ENCODE measurements at regions of chr14 and their contacts with region 1.

Region 1: GRCh38 chr14:69766984-69767368 is at the start of gene SRSF5:
- DNase-seq: peak; percentile 94
- H3K4me3 ChIP-seq: peak within 1 kb of the TSS; percentile 87 to 96 (median 90)
- H3K27ac ChIP-seq: peak within 1 kb of the TSS; percentile 98
- H3K4me1 ChIP-seq: peaks cover 17% of the 10 kb centered on the region
- H3K27me3 ChIP-seq: no peaks in the 10 kb centered on the region
- CTCF ChIP-seq: no peak
- total RNA-seq, gene SRSF5: 125 to 257 TPM

Region 2: DNA sequence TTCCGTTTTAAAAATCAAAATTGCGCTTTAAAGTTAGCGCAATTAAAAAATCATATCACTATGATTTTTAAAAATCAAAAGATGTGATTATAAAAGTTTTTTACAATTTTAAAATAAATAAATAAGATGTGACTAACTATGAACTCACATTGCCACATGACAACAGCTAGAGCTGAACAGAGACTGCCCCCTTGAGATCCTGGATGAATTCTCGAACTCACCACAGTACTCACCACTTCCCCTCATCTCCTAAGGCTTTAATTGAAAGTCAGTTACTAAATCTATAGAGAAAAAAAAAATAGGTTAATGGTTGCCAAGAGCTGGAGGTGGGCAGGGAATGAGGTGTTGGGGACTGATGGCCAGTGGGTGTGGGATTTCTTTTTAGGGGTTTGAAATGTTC is 1358.3 kb before region 1 on chr14:
- CTCF ChIA-PET with region 1: no interaction called
- dilution Hi-C with region 1: no loop called
- in situ Hi-C with region 1: no loop called
- intact Hi-C with region 1: no loop called
- DNase-seq: no peak
- H3K4me3 ChIP-seq: no peak overlapping the region
- H3K27ac ChIP-seq: no peak overlapping the region
- H3K4me1 ChIP-seq: peaks cover 44% of the 10 kb centered on the region
- H3K27me3 ChIP-seq: no peaks in the 10 kb centered on the region
- CTCF ChIP-seq: no peak

Region 3: GRCh38 chr14:69741055-69741454 is 25.9 kb before region 1 on chr14:
- CTCF ChIA-PET with region 1: no interaction called
- dilution Hi-C with region 1: no loop called
- in situ Hi-C with region 1: no loop called
- intact Hi-C with region 1: loop called (anchors 2 kb)
- DNase-seq: peak; percentile 53
- H3K4me3 ChIP-seq: no peak overlapping the region
- H3K27ac ChIP-seq: no peak overlapping the region
- H3K4me1 ChIP-seq: peaks cover 13% of the 10 kb centered on the region
- H3K27me3 ChIP-seq: no peaks in the 10 kb centered on the region
- CTCF ChIP-seq: no peak

Region 4: DNA sequence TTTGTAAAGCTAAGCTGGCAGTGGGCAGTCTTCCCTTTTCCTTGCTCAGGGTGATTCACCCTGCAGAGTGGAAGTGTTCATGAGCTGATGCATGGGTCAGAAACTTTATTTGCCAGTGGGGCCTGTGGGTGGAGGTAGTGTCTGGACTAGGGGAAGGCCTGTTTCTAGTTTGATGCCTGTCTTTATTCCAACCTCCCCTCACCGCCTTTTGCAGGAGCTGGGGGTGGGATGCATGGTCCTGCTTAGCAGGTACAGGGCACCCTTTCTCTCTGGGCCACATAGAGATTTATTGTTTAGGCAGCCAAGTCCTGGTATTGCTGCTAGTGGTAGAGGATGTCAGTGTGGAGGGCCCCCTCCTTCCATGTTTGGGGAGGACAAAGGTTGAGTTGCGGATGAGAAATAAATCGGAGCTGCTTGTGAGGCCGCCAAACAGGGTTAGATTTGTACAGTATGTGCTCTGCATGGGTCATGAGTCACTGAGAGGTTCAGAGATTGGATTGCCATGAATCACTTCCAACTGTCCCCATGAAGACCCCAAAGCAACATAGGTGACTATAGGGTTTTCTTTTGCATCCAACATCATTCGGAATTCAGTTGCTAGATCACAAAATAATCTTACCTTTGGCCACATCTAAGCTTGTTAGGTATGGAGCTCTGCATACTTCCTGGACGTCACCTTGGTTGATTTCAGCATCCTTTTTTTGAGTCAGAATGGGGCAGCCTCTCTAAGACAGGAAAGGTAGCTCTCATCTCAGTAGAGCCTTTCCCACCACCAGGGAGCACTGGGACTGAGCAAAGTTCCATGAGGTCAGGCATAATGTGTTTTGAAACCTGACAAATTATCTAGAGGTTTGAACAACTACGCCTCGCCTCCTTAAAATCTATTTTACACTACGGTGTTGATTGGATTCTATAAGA is 121.0 kb after region 1 on chr14:
- CTCF ChIA-PET with region 1: interaction called, 18 read pairs
- dilution Hi-C with region 1: no loop called
- in situ Hi-C with region 1: no loop called
- intact Hi-C with region 1: no loop called
- DNase-seq: peak; percentile 62
- H3K4me3 ChIP-seq: no peak overlapping the region
- H3K27ac ChIP-seq: peak overlapping the region; percentile 76
- H3K4me1 ChIP-seq: peaks cover 27% of the 10 kb centered on the region
- H3K27me3 ChIP-seq: no peaks in the 10 kb centered on the region
- CTCF ChIP-seq: no peak

Region 5: GRCh38 chr14:70080074-70080473 is 313.1 kb after region 1 on chr14:
- CTCF ChIA-PET with region 1: no interaction called
- dilution Hi-C with region 1: no loop called
- in situ Hi-C with region 1: no loop called
- intact Hi-C with region 1: no loop called
- DNase-seq: no peak
- H3K4me3 ChIP-seq: no peak overlapping the region
- H3K27ac ChIP-seq: no peak overlapping the region
- H3K4me1 ChIP-seq: no peaks in the 10 kb centered on the region
- H3K27me3 ChIP-seq: peaks cover 3% of the 10 kb centered on the region
- CTCF ChIP-seq: no peak